ENCODE measurements at regions of chr1 and their contacts with region 1.

Region 1: GRCh38 chr1:87328272-87329050 is at the start of gene LMO4:
- DNase-seq: peak; percentile 78
- H3K4me3 Mint-ChIP-seq: peak within 1 kb of the TSS; percentile 94
- H3K27ac Mint-ChIP-seq: peak within 1 kb of the TSS; percentile 95
- H3K4me1 Mint-ChIP-seq: peaks cover 45% of the 10 kb centered on the region
- H3K27me3 Mint-ChIP-seq: peaks cover 5% of the 10 kb centered on the region
- total RNA-seq, gene LMO4: 41.1 and 47.8 TPM in 2 replicates

Region 2: DNA sequence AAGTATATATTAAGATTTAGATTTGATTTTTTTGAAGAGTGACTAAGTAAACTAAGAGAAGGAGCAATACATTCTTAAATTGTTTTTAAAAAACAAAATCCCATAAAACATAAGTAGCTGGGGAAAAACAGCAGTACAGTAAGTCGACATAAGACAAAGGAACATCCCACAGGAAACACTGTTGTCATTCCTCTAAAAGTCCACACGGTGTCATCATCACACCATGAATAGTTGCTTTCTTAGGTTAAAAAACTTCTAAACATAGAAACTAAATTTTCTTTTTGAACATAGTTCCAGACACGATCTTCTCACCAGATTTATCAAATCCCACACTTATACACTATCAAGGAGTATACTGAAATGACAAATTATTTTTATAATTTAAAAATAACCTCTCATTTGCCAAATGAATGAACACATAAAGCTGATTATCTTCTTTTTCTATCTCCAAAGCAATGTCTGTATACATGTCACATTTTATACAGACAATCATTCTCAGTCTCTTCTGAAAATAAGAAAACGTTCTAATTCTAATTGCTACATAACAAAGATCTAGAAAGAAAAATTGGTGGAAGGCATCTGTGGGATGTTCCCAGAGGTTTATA is 948.1 kb before region 1 on chr1:
- intact Hi-C with region 1: loop called (anchors 5 kb)
- DNase-seq: no peak
- H3K4me3 Mint-ChIP-seq: no peak overlapping the region
- H3K27ac Mint-ChIP-seq: no peak overlapping the region
- H3K4me1 Mint-ChIP-seq: peaks cover 22% of the 10 kb centered on the region
- H3K27me3 Mint-ChIP-seq: no peaks in the 10 kb centered on the region

Region 3: GRCh38 chr1:86704458-86704971 is 623.9 kb before region 1 on chr1 and contains the start of gene SH3GLB1:
- intact Hi-C with region 1: loop called (anchors 2 kb)
- DNase-seq: peak; percentile 87
- H3K4me3 Mint-ChIP-seq: peak within 1 kb of the TSS; percentile 100
- H3K27ac Mint-ChIP-seq: peak within 1 kb of the TSS; percentile 97
- H3K4me1 Mint-ChIP-seq: peaks cover 47% of the 10 kb centered on the region
- H3K27me3 Mint-ChIP-seq: no peaks in the 10 kb centered on the region
- total RNA-seq, gene SH3GLB1: 63.4 and 66.8 TPM in 2 replicates

Region 4: GRCh38 chr1:87045761-87046304 is 282.6 kb before region 1 on chr1:
- intact Hi-C with region 1: loop called (anchors 5 kb)
- DNase-seq: peak; percentile 47
- H3K4me3 Mint-ChIP-seq: peak overlapping the region; percentile 47
- H3K27ac Mint-ChIP-seq: peak overlapping the region; percentile 91
- H3K4me1 Mint-ChIP-seq: peaks cover 22% of the 10 kb centered on the region
- H3K27me3 Mint-ChIP-seq: no peaks in the 10 kb centered on the region

Region 5: GRCh38 chr1:87140851-87141555 is 187.5 kb before region 1 on chr1:
- intact Hi-C with region 1: no loop called
- DNase-seq: no peak
- H3K4me3 Mint-ChIP-seq: no peak overlapping the region
- H3K27ac Mint-ChIP-seq: no peak overlapping the region
- H3K4me1 Mint-ChIP-seq: no peaks in the 10 kb centered on the region
- H3K27me3 Mint-ChIP-seq: peaks cover 14% of the 10 kb centered on the region

Region 6: DNA sequence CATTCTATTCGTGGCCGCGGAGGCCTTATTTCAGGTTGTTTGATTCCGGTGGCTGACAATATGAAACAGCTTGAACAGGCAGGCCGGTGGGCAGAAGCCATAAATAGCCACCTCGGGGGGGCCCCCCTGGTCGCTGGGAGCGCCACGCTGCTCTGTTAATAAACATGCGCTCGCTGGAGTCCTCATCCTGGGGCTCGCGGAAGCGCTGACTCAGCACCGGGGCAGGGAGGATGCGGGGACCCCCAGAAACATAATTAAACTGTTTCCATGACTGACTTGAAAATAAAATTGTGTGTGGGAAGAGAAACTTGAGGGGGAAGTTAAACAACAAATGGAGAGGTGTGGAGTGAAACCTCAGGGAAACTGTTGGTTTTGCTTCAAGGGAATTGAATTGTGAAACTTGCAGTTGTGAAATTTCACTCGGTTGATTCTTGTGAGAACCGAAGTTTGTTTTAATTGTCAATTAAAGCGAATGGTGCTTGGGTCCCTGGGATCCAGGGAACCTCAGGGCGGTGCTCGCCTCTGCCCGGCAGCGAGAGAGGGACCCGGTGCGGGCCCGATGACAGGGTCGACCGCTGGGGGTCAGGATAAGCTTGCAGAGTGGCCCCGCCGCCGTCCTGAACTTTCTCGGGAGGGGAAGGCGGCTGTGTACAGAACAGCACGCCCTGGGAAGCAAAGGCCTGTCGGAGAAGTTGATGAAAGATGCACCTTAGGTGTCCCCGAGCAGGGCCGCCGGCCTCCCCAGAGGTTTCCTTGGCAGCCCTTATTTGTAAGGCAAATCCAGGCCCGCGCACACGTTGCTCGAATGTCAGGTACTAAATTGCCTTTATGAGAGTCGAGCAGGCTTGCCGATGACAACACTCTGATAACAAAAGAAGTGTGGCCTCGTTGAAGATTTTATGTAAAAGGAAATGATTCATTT is 176.7 kb before region 1 on chr1:
- intact Hi-C with region 1: loop called (anchors 2 kb)
- DNase-seq: peak; percentile 5
- H3K4me3 Mint-ChIP-seq: peak overlapping the region; percentile 65
- H3K27ac Mint-ChIP-seq: peak overlapping the region; percentile 25
- H3K4me1 Mint-ChIP-seq: peaks cover 18% of the 10 kb centered on the region
- H3K27me3 Mint-ChIP-seq: peaks cover 40% of the 10 kb centered on the region

Region 7: DNA sequence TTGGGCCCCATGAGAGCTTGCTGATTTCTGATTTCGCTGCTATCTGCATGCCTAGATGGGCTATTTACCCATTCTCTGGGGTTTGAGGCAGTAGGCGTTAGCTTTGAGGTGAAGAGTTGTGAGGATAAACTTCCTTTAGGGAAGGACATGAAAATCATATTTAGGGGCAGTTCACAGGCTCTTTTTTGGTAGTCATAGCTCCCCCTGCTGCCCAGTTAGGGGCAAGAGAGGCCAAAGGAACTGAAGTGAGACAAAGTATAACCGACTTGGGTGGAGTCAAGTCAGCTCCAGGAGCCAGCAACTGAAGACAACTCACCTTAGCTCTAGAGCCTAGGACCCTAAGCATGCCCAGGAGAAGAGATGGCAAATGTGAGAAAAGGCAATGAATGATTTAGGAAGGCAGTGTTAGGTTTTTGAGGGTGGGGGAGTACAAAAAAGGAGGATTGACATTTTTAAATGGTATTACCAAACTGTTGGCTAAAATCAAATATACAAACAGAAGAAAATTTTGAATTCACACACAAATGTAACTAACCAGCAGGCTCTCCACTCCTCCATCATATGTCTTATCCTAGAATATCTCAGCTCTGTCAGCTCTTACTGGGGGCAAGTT is 625.4 kb after region 1 on chr1:
- intact Hi-C with region 1: loop called (anchors 1 kb)
- DNase-seq: peak; percentile 39
- H3K4me3 Mint-ChIP-seq: no peak overlapping the region
- H3K27ac Mint-ChIP-seq: no peak overlapping the region
- H3K4me1 Mint-ChIP-seq: no peaks in the 10 kb centered on the region
- H3K27me3 Mint-ChIP-seq: peaks cover 14% of the 10 kb centered on the region

Region 8: GRCh38 chr1:88867743-88868521 is 1539.5 kb after region 1 on chr1:
- intact Hi-C with region 1: loop called (anchors 5 kb)
- DNase-seq: no peak
- H3K4me3 Mint-ChIP-seq: peak overlapping the region; percentile 60
- H3K27ac Mint-ChIP-seq: peak overlapping the region; percentile 87
- H3K4me1 Mint-ChIP-seq: peaks cover 35% of the 10 kb centered on the region
- H3K27me3 Mint-ChIP-seq: no peaks in the 10 kb centered on the region